ENCODE measurements at regions of chr5 and their contacts with region 1.

Region 1: DNA sequence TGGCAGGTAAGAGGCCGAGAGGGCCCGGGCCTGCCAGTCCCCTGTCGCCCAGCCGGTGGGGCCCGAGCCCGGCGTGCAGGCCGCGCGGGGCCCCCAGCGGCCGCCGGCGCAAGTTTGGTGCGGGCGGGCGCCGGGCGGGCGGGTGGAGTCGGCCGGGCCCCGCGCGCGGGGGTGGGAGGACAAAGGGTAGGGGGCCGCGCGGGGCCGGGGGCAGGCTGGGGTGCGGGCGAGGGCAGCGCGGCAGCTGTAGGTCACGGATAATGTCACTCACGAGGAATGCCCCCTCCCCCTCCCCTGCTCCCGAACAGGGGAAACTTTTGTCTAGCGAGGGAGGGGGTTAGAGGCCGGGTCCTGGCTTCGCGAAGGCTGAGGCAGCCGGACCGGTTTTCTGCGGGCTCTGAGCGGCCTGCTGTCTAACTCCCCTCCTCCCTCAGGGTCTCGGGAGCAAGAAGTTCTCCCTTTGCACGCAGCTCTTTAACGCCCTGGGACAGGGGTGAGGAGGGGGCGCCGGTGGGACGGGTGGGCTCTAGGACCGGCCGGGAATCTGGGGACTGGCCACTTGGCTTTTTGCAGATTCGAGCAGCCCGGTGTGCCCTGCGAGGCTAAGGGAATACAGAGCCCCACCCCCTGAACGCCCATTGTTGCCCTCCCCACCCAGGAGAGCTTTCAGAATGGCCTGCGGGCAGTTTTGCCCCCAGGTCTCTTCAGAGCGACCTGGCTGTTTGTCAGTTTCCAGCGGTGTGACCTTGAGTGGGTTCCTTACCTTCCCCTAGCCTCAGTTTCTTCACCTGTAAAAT is 21.3 kb upstream of the NDST1 start:
- DNase-seq: peak; percentile 63 to 86
- H3K4me3 ChIP-seq: peak overlapping the region; percentile 50 to 99 (median 74)
- H3K27ac ChIP-seq: peak overlapping the region; percentile 35; the same call in 1 of the 2 replicates
- H3K4me1 ChIP-seq: peaks cover 18 to 51% (median 41%) of the 10 kb centered on the region in 4 experiments
- H3K27me3 ChIP-seq: no peaks in the 10 kb centered on the region
- CTCF ChIP-seq: peak in 1 of 3 experiments; percentile 24; a peak in 2 of 4 replicates
- EP300 ChIP-seq: peak in 1 of 2 experiments; percentile 18; a peak in 1 of 3 replicates
- POLR2A ChIP-seq: peak in 1 of 2 experiments; percentile 14; a peak in 1 of 3 replicates
- RAD21 ChIP-seq: peak in 1 of 2 experiments; percentile 25; a peak in 1 of 4 replicates

Region 2: DNA sequence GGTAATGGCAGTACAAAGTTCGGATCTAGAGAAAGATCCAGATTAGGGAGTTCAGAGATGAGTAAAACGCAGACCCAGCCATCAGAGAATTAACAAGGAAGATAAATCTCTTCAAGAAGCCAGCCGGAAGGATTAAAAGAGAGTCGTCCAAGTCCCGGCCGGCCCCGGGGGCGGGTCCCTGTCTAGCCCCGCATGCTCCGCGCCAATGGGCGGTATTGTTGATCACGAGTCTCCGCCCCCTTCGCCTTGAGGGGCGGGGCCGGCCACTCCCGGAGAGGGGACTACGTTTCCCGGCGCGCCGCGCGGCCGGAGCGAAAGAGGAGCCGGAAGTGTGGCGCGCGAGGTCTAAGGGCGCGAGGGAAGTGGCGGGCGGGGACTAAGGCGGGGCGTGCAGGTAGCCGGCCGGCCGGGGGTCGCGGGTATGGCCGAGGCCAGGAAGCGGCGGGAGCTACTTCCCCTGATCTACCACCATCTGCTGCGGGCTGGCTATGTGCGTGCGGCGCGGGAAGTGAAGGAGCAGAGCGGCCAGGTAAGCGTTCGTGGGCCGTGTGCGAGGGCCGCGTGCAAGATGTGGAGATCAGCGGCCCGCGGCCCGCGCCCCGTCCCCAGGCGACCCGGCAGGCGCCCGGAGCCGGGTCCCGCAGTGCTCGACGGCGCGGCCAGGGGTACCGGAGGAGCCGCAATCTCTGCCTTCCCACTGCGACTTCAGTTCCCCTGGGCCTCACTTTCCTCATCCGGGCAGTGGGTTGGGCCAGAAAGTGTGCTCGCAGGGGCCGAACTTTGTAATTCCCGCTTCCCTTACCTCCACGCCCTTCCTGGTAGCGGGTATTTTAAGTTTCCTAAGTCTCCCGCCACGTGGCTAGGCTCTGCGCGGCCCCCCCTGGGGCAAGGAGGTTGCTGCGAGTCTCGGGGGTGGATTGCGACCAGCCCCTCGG is 129.0 kb before region 1 on chr5 and contains the start of gene TCOF1:
- CTCF ChIA-PET with region 1: no interaction called
- POLR2A ChIA-PET with region 1: no interaction called
- DNase-seq: peak; percentile 91 to 98
- H3K4me3 ChIP-seq: peak within 1 kb of the TSS; percentile 91 to 99 (median 96)
- H3K27ac ChIP-seq: peak within 1 kb of the TSS; percentile 73
- H3K4me1 ChIP-seq: peaks cover 0 to 7% (median 2%) of the 10 kb centered on the region in 4 experiments; a peak in 4 of 7 replicates
- H3K27me3 ChIP-seq: no peaks in the 10 kb centered on the region
- CTCF ChIP-seq: no peak
- EP300 ChIP-seq: no peak
- POLR2A ChIP-seq: peak; percentile 74 to 82
- RAD21 ChIP-seq: no peak
- total RNA-seq, gene TCOF1: 158 and 170 TPM in 2 replicates

Region 3: DNA sequence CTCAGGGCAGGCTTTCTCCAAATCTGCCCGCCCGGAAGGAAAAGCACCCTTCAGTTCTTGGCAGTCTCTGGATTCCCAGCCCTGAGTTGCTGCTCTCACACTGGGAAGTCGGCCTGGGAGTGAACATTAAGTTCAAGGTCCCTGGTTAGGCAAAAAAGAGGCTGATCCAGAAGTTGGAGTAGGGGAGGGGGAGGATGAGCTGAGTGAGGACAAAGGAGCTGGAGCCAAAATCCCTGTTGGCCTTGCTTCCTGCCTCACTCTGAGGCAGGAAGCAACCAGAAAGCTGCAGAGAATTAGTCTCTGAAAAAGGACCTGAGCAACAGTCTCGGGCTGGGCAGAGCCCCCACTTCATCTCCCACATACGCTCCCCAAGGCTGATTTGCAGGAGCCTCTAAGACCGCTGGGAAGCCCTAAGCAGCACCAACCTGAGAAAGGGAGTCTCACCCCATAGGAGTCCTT is 22.0 kb before region 1 on chr5:
- CTCF ChIA-PET with region 1: interaction called, 8 read pairs
- POLR2A ChIA-PET with region 1: interaction called, 13 read pairs
- DNase-seq: peak in 1 of 2 experiments; percentile 59
- H3K4me3 ChIP-seq: no peak overlapping the region
- H3K27ac ChIP-seq: no peak overlapping the region
- H3K4me1 ChIP-seq: peaks cover 3 to 24% (median 14%) of the 10 kb centered on the region in 4 experiments
- H3K27me3 ChIP-seq: no peaks in the 10 kb centered on the region
- CTCF ChIP-seq: no peak
- EP300 ChIP-seq: no peak
- POLR2A ChIP-seq: peak in 1 of 2 experiments; percentile 48; a peak in 2 of 3 replicates
- RAD21 ChIP-seq: no peak

Region 4: GRCh38 chr5:150497274-150497988 is 10.8 kb after region 1 on chr5:
- CTCF ChIA-PET with region 1: interaction called, 571 read pairs
- POLR2A ChIA-PET with region 1: interaction called, 122 read pairs
- DNase-seq: no peak
- H3K4me3 ChIP-seq: no peak overlapping the region
- H3K27ac ChIP-seq: peak overlapping the region; percentile 25; the same call in 1 of the 2 replicates
- H3K4me1 ChIP-seq: peaks cover 21 to 28% (median 27%) of the 10 kb centered on the region in 4 experiments
- H3K27me3 ChIP-seq: no peaks in the 10 kb centered on the region
- CTCF ChIP-seq: no peak
- EP300 ChIP-seq: no peak
- POLR2A ChIP-seq: no peak
- RAD21 ChIP-seq: no peak

Region 5: GRCh38 chr5:150523472-150524350 is 37.1 kb after region 1 on chr5:
- CTCF ChIA-PET with region 1: interaction called, 571 read pairs
- POLR2A ChIA-PET with region 1: interaction called, 8 read pairs
- DNase-seq: no peak
- H3K4me3 ChIP-seq: no peak overlapping the region
- H3K27ac ChIP-seq: no peak overlapping the region
- H3K4me1 ChIP-seq: peaks cover 7 to 25% (median 14%) of the 10 kb centered on the region in 4 experiments
- H3K27me3 ChIP-seq: no peaks in the 10 kb centered on the region
- CTCF ChIP-seq: peak; percentile 61 to 86 (median 71)
- EP300 ChIP-seq: no peak
- POLR2A ChIP-seq: no peak
- RAD21 ChIP-seq: peak; percentile 65 to 78